GM13976 (cell line): ENCODE measurements at regions of chr15 and their contacts with region 1.

Region 1: DNA sequence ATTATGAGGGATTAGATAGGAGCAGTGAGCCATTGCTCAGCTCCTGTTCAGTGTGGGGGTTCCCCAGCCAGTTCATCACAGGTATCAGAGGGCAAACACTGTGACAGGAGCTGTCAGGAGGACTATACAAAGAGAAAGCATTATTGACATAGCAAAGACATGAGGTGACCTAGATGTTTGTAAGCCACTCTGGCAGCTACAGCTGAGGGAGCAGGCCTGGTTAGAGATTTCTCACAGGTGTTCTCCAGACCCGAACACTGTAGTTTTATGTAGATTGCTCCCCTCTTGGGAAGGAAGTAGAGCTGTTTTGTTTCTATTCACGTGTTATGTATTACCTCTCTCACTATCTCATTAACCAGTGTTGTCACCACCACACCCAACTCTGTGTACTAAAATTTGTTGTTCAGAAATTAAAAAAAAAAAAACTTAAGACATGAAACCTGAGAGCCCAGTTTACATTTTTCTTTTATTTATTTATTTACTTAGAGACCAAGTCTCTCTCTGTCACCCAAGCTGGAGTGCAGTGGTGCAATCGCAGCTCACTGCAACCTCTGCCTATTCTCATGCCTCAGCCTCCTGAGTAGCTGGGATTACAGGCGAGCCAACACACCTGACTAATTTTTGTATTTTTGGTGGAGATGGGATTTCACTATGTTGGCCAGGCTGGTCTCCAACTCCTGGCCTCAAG is 123.7 kb downstream of the RBPMS2 start:
- DNase-seq: peak; percentile 55
- CTCF ChIP-seq: no peak

Region 2: DNA sequence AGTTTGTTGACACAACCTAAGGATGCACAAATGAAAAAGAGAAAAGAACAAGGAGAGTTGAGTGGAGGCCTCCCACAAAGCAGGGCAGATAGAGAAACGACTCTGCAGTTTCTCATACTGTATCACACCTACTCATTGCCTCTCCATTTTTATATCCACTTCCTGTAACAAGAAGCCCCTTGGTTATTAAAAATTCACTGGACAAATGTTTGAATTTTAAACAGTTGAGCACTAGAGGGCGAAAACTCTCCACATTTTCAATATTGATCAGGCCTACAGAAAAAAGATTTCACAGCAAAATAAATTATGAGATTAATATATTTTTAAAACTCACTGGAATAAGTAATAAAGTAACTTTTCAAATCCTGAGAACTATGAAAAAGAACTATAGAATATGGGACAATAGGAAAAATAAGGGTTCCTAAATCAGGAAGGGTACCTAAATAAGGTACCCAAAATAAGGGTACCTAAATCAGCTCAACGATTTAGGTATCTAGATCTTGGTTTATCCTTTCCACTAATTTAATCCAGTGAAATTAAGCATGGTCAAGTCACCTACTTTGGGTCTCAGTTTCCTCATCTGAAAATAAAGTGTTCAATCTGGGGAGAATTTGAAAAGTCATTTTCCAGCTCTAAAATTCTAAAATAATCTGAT is 441.9 kb before region 1 on chr15:
- in situ Hi-C with region 1: loop called (anchors 25 kb)
- DNase-seq: peak; percentile 45
- CTCF ChIP-seq: peak; percentile 36